Activated T-helper 1 cell treated with anti-CD3 and anti-CD28 coated beads, Interleukin-12 subunit alpha, Interleukin-12 subunit beta, Interleukin-2, Interleukin-4 antibody, amounts not matched to agents 30 ng/mL and 10 ng/mL and 1 ng/mL, durations not matched to agents 14 hours and 24 hours and 36 hours (primary cell): ENCODE measurements at regions of chr6 and their contacts with region 1.

Region 1: DNA sequence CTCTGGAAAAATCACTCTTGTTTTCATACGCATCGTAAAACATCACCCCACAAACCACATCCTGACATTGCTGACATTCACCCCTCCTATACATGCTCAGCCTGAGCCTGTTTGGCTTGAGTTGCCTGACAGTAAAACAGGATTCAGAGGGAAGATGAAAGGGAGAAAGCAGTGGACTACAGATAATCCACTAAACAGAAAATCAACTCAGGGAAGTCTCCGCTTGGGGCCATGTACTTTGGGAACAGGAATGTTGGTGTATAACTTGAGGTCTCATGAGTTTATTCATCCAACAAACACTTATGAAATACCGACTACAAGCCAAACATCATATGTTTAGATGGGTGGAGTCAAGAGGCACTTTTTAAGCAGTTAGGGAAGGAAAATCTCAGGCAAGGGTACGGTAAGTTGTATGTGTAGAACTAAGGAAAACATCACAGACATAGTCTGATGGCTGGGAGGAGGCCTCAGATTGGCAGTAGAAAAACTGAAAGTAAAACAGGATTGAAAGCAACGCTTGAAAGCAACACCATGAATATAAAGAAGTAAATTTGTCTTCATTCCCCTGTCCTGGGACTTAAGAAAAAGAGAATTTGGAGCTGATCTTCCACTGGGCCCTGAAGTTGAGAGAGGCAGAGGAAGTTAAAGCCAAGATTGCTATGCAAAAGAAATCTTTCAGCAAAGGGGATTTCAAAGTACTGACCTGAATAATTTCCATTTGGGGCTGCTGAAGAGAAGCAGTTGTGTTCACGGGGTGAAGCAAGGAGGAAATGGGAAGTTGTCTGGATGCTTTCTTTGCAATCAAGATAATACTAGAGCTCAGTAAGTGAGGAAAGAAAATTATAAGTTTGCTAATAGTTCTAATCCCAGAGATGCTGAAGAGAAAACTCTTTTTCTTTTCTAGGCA is 28.8 kb downstream of the PDE7B start:
- DNase-seq: peak; percentile 61
- H3K4me3 Mint-ChIP-seq: peak overlapping the region; percentile 79
- H3K27ac Mint-ChIP-seq: peak overlapping the region; percentile 97
- H3K4me1 Mint-ChIP-seq: peaks cover 46% of the 10 kb centered on the region
- H3K27me3 Mint-ChIP-seq: no peaks in the 10 kb centered on the region

Region 2: GRCh38 chr6:135819665-135820064 is 60.7 kb before region 1 on chr6:
- intact Hi-C with region 1: no loop called
- DNase-seq: no peak
- H3K4me3 Mint-ChIP-seq: no peak overlapping the region
- H3K27ac Mint-ChIP-seq: no peak overlapping the region
- H3K4me1 Mint-ChIP-seq: no peaks in the 10 kb centered on the region
- H3K27me3 Mint-ChIP-seq: peaks cover 4% of the 10 kb centered on the region

Region 3: GRCh38 chr6:135901774-135902524 is 21.6 kb after region 1 on chr6:
- intact Hi-C with region 1: loop called (anchors 1 kb)
- DNase-seq: no peak
- H3K4me3 Mint-ChIP-seq: peak overlapping the region; percentile 48
- H3K27ac Mint-ChIP-seq: peak overlapping the region; percentile 70
- H3K4me1 Mint-ChIP-seq: peaks cover 53% of the 10 kb centered on the region
- H3K27me3 Mint-ChIP-seq: no peaks in the 10 kb centered on the region